Naive thymus-derived CD8-positive, alpha-beta T cell (primary cell): ENCODE measurements at regions of chr19 and their contacts with region 1.

Region 1: GRCh38 chr19:1032264-1032867 is 6.0 kb downstream of the CNN2 start:
- DNase-seq: no peak
- ATAC-seq: no peak
- H3K4me3 Mint-ChIP-seq: peak overlapping the region in 4 of 10 donors; percentile 38 to 65 (median 54)
- H3K27ac Mint-ChIP-seq: peak overlapping the region; percentile 68 to 97 (median 88)
- H3K4me1 Mint-ChIP-seq: peaks cover 23 to 54% (median 50%) of the 10 kb centered on the region in 4 donors
- H3K27me3 Mint-ChIP-seq: no peaks in the 10 kb centered on the region

Region 2: DNA sequence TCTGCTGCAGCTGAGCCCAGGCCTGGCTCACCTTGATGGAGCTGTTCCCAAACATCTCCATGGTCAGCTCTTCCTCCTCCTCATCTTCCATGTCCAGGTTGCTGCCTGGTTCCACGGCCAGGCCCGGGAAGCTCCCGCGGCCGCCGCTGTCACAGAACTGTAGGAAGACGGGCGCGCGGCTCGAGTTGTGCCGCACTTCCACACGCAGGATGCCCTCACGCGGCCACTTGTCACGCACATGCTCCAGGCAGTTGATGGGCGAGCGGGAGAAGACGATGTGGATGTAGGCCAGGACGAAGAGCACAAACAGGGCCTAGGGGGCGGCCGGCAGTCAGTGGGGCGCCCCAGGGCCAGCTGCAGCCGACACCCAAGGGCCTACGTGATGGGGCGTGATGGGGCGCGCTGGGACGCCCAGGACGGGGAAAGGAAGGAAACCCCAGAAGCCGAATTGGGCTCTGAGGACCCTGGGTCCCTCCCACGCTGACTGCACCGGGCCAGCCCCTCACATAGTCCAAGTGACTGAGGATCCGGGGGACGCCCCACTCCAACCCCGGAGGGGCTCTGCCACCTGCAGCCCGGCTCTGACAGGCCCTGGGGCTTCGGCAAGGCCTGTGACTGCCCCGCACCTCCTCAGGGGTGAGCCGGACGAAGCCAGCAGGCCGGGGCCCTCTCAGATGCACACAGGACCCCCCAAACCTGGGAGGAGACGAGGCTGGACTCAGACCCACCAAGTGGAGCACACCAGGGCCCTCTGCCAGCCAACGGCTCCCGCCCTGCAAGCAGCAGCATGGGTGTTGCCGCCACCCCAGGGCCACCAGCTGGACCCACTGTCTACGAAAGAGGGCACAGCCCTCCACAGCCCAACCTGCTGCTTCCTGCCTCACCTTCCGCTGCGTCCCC is 18.0 kb before region 1 on chr19:
- POLR2A ChIA-PET with region 1: interaction called, 400 read pairs
- DNase-seq: no peak
- ATAC-seq: no peak
- H3K4me3 Mint-ChIP-seq: peak overlapping the region in 1 of 10 donors; percentile 41
- H3K27ac Mint-ChIP-seq: peak overlapping the region in 3 of 10 donors; percentile 69 to 78 (median 77)
- H3K4me1 Mint-ChIP-seq: peaks cover 11 to 36% (median 34%) of the 10 kb centered on the region in 4 donors
- H3K27me3 Mint-ChIP-seq: no peaks in the 10 kb centered on the region